Mammary epithelial cell (primary cell): ENCODE measurements at regions of chr1 and their contacts with region 1.

Region 1: GRCh38 chr1:30700528-30701257 is 22.7 kb downstream of the MATN1 start:
- DNase-seq: peak; percentile 68
- H3K4me3 ChIP-seq: no peak overlapping the region
- H3K27ac ChIP-seq: no peak overlapping the region
- H3K4me1 ChIP-seq: peaks cover 24% of the 10 kb centered on the region
- H3K27me3 ChIP-seq: no peaks in the 10 kb centered on the region
- CTCF ChIP-seq: no peak

Region 2: GRCh38 chr1:30618335-30618747 is 82.4 kb before region 1 on chr1:
- CTCF ChIA-PET with region 1: no interaction called
- dilution Hi-C with region 1: no loop called
- in situ Hi-C with region 1: no loop called
- intact Hi-C with region 1: loop called (anchors 2 kb)
- DNase-seq: peak; percentile 88
- H3K4me3 ChIP-seq: no peak overlapping the region
- H3K27ac ChIP-seq: peak overlapping the region; percentile 74
- H3K4me1 ChIP-seq: peaks cover 46% of the 10 kb centered on the region
- H3K27me3 ChIP-seq: no peaks in the 10 kb centered on the region
- CTCF ChIP-seq: no peak